Esophagus squamous epithelium (tissue), 5 donors: ENCODE measurements at regions of chr2 and their contacts with region 1.

Region 1: DNA sequence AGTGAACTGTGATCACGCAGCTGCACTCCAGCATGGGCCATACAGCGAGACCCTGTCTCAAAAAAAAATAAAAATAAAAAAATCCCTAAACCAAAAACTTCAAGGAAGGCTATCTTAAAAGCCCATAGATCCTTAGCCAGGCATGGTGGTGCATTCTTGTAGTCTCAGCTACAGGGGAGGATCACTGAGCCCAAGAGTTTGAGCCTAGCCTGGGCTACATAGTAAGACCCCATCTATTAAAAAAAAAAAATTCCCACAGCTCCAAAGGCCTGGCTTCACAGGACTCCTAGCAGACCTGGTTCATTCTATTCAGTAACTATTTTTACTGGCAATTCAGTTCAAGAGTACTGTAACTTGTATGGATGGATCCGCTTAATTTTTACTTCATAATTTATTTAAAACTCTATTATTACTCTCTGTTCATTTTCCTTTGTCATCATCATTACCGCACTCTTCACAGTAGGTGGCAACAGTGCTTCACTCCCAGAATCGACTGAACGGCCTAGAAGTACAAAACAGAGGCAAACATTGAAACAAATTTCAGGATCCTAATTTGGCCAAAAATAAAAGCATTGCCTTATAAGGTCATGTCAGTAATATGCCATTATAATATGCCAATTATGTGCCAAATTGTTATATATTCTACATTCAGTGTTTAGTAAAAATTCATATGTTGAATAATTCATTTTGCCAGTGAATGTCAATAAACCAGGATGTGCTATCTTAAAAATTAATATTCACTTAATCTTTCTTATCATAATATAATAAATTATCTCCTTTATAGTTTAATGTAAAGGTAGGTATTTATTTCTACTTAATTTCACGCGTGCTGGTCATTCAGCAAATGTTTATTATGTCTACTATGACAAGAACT is 14.3 kb upstream of the STAM2 start:
- DNase-seq: no peak
- H3K4me3 ChIP-seq: no peak overlapping the region
- H3K27ac ChIP-seq: no peak overlapping the region
- H3K4me1 ChIP-seq: no peaks in the 10 kb centered on the region
- H3K27me3 ChIP-seq: peaks cover 0 to 19% (median 0%) of the 10 kb centered on the region in 4 donors
- CTCF ChIP-seq: peak; percentile 47 to 84 (median 70)
- POLR2A ChIP-seq: no peak

Region 2: GRCh38 chr2:152335010-152335725 is 145.3 kb after region 1 on chr2 and contains the start of gene FMNL2:
- intact Hi-C with region 1: loop called (anchors 10 kb)
- DNase-seq: no peak
- H3K4me3 ChIP-seq: peak within 1 kb of the TSS; percentile 82 to 93 (median 86)
- H3K27ac ChIP-seq: peak within 1 kb of the TSS; percentile 79 to 89 (median 86)
- H3K4me1 ChIP-seq: peaks cover 0 to 51% (median 9%) of the 10 kb centered on the region in 3 donors
- H3K27me3 ChIP-seq: peaks cover 0 to 5% (median 0%) of the 10 kb centered on the region in 4 donors
- CTCF ChIP-seq: peak in 1 of 6 experiments; percentile 3
- POLR2A ChIP-seq: peak in 2 of 4 donors; percentile 63 to 74
- total RNA-seq, gene FMNL2: 5.8 to 19.8 (median 16.9) TPM

Region 3: DNA sequence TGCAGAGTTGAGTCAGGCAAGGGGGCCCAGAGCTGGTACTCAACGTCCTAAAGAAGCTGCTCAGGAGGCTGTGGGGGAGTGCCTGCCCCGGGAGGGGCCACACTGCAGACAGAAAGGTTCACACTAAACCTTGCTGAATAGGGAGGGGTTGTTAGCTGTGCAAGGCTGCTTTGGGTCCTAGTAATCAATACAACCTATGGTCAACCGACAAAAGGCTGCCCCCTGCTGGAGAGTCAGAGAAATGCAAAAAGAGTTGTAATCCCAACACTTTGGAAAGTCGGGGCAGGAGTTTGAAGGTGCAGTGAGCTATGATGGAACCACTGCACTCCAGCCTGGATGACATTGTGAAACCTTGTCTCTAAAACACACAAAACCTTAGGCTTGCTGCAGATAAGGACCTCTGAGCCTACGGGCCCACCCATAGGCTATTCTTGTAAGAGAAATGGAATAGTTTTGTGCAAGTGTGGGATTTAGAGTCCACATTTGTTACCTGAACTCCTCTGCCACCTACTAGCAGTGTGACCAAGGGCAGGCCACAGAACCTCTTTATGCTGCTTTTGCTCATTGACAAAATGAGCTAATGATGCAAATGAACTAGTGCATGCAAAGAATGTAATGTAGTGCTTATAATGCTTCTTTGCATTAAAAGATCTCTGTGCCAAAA is 445.9 kb after region 1 on chr2:
- intact Hi-C with region 1: loop called (anchors 5 kb)
- DNase-seq: no peak
- H3K4me3 ChIP-seq: no peak overlapping the region
- H3K27ac ChIP-seq: no peak overlapping the region
- H3K4me1 ChIP-seq: no peaks in the 10 kb centered on the region
- H3K27me3 ChIP-seq: no peaks in the 10 kb centered on the region
- CTCF ChIP-seq: peak; percentile 72 to 90 (median 78)
- POLR2A ChIP-seq: no peak